ENCODE measurements at regions of chr5 and their contacts with region 1.

Region 1: DNA sequence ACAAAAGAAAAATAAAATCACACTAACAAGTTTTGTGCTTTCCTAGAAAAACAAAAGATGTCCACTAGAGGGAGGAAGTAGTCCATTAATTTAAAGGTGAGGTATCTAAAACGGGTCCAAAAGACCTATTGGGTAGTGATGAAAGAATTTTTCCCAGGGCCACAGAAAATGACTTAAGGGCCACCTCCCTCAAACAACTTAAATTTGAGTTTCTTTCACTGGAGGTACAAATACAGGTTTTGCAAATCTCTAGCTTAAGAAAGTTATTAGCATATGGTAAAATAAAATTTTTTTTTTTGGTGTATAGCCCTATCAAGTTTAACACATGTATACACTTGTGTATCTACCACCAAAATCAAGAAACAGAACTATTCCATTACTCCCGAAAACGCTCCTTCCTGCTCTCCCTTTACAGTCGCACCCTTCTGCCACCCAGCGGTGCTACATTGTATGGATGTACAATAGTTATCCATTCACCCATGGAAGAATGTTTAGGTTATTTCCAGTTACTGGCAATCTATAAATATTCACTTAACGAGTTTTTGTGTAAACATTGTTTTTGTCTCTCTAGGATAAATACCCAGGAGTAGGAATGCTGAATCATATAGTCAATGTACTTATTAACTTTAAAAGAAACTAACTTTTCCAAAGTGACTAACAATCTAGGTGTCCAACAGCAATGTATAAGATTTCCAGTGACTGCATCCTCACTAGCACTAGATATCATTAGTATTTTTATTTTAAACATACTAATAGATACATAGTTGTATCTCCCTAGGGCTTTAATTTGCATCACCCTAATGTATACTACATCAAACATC is 21.9 kb downstream of the DEPDC1B start:
- H3K4me3 Mint-ChIP-seq: no peak overlapping the region
- H3K27ac Mint-ChIP-seq: peak overlapping the region; percentile 56
- H3K4me1 Mint-ChIP-seq: peaks cover 26% of the 10 kb centered on the region
- H3K27me3 Mint-ChIP-seq: no peaks in the 10 kb centered on the region

Region 2: GRCh38 chr5:60843936-60844905 is 166.2 kb after region 1 on chr5 and contains the start of gene ELOVL7:
- intact Hi-C with region 1: loop called (anchors 5 kb)
- H3K4me3 Mint-ChIP-seq: peak within 1 kb of the TSS; percentile 91
- H3K27ac Mint-ChIP-seq: peak within 1 kb of the TSS; percentile 75
- H3K4me1 Mint-ChIP-seq: peaks cover 21% of the 10 kb centered on the region
- H3K27me3 Mint-ChIP-seq: peaks cover 54% of the 10 kb centered on the region

Region 3: GRCh38 chr5:60883229-60883628 is 205.2 kb after region 1 on chr5:
- intact Hi-C with region 1: loop called (anchors 1 kb)
- H3K4me3 Mint-ChIP-seq: no peak overlapping the region
- H3K27ac Mint-ChIP-seq: no peak overlapping the region
- H3K4me1 Mint-ChIP-seq: no peaks in the 10 kb centered on the region
- H3K27me3 Mint-ChIP-seq: no peaks in the 10 kb centered on the region

Region 4: DNA sequence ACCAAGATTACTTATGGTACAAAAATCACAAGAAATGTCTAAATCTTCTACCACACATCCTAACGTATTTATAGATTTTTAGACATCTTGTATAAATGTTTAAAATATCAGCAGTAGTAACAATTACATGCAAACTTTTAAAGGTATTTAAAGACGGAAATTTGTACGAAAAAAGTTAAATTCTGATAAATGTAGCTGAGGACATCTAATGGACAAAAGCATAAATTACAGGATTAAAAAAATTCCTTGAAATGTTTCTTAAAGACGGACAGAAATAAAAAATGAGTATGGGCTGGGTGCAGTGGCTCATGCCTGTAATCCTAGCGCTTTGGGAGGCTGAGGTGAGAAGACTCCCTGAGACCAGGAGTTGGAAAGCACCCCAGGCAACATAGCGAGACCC is 251.0 kb after region 1 on chr5:
- intact Hi-C with region 1: loop called (anchors 2 kb)
- H3K4me3 Mint-ChIP-seq: no peak overlapping the region
- H3K27ac Mint-ChIP-seq: no peak overlapping the region
- H3K4me1 Mint-ChIP-seq: no peaks in the 10 kb centered on the region
- H3K27me3 Mint-ChIP-seq: no peaks in the 10 kb centered on the region

Region 5: GRCh38 chr5:60944904-60945812 is 267.1 kb after region 1 on chr5 and contains the starts of genes ERCC8 and NDUFAF2:
- intact Hi-C with region 1: loop called (anchors 5 kb)
- H3K4me3 Mint-ChIP-seq: no peak within 1 kb of the TSS
- H3K27ac Mint-ChIP-seq: no peak within 1 kb of the TSS
- H3K4me1 Mint-ChIP-seq: peaks cover 7% of the 10 kb centered on the region
- H3K27me3 Mint-ChIP-seq: no peaks in the 10 kb centered on the region